Tibial artery (tissue), 4 donors: ENCODE measurements at regions of chr14 and their contacts with region 1.

Region 1: DNA sequence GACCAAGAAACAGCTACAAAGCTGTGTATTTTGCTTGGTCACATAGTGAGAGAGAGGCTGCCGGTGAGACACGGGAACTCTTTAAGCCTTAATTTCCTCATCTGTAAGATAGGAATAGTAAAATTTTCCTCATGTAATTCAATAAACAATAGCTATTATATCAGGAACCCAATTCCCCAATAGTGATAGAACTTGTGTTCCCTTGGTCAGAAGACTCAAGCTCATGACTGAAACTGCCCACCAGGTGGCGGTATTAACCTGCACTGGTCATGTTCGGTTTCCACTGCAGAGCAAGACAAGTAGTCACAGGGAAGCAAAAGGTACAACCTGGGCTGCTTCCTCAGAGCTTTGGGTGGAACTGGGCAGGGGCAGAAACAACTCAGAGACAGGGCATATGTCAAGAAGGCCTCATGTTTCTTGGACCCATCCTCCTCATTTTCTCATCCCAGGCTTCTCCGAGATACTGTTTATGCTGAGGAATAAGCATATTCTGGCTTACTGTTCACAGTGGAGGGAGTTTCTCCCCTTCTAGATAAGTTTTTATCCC is 4.2 kb upstream of the AJUBA start:
- DNase-seq: peak; percentile 90 to 92
- H3K4me3 ChIP-seq: no peak overlapping the region
- H3K27ac ChIP-seq: no peak overlapping the region
- H3K4me1 ChIP-seq: peaks cover 0 to 12% (median 7%) of the 10 kb centered on the region in 4 donors
- H3K27me3 ChIP-seq: no peaks in the 10 kb centered on the region
- CTCF ChIP-seq: peak; percentile 90 to 93

Region 2: DNA sequence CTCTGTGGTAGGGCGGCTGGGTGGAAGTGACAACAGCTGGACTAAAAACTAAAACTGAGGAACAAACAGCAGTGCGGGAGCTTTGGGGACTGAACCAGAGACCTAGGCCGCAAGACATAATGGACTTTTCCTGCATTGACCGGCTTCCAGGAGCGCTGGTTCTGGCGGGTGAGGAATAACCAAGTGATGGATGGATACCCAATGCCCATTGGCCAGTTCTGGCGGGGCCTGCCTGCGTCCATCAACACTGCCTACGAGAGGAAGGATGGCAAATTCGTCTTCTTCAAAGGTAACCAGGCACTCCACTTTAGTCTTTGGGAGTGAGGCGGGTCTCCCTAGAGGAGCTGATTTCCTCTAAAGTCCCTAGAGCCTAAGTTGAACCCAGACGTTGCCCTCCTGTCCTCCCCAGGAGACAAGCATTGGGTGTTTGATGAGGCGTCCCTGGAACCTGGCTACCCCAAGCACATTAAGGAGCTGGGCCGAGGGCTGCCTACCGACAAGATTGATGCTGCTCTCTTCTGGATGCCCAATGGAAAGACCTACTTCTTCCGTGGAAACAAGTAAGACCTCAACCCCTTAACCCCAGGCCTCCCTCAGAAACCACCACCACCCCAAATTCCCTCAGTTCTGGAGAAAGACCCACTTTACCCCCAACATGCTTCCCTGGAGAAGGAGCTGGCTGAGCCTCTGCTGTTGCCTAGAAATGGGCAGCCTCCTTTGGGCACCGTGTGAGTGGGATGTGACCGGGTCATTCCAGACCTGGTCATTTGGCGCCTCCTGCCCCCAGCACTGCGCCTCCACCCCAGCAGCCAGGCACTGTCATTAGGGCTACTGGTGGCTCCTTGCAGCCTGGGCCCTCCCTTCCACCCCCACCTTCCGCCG is 142.1 kb before region 1 on chr14:
- intact Hi-C with region 1: loop called (anchors 5 kb)
- DNase-seq: peak in 1 of 2 donors; percentile 60
- H3K4me3 ChIP-seq: no peak overlapping the region
- H3K27ac ChIP-seq: peak overlapping the region; percentile 92 to 97
- H3K4me1 ChIP-seq: peaks cover 8 to 81% (median 57%) of the 10 kb centered on the region in 4 donors
- H3K27me3 ChIP-seq: no peaks in the 10 kb centered on the region
- CTCF ChIP-seq: no peak

Region 3: DNA sequence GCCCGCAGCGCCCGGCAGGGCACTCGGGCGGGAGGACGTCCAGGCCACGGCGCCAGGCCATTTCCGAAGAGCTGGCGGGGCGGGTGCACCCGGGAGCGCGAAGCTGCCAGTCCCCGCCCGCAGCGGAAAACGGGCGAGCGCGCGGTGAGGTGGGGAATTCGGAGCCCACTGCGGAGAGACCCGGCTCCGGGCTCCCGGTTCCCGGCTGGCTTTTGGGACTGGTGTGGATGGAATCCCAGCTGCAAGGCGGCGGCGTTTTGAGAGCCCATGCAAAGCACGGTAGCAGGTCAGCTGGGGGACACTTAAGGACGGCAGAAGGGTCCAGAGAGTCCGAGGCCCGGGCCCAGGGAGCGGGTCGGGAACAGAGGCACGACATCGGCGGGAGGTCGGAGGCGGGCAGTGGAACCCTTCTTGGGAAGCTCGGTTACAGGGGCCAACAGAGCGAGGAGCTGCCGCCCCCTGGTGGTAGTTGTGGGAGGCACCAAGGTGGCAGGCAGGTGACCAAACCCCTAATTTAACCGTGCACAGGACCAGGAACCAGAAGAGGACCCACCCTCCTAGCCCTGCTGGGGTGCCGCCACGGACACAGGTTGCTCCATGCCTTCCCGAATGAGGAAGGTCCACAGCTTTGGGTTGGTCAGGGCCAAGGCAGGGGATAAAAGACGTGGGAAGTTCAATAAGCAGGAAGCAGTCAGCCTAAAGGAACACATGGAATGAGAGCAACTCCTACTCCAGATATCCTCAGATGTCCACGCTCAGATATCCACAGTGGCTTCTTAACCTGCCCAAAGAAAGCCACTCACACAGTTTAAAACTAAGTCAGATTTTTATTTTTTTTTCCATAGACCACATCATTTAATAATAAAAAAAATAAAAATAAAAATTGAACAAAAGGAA is 71.4 kb after region 1 on chr14:
- intact Hi-C with region 1: loop called (anchors 2 kb)
- DNase-seq: peak; percentile 81 to 92
- H3K4me3 ChIP-seq: peak overlapping the region; percentile 55 to 70
- H3K27ac ChIP-seq: peak overlapping the region; percentile 37 to 62
- H3K4me1 ChIP-seq: peaks cover 0 to 29% (median 17%) of the 10 kb centered on the region in 4 donors
- H3K27me3 ChIP-seq: no peaks in the 10 kb centered on the region
- CTCF ChIP-seq: peak; percentile 93 to 95